Ascending aorta (tissue), 2 donors: ENCODE measurements at regions of chr1 and their contacts with region 1.

Region 1: GRCh38 chr1:192559115-192560006 is 16.2 kb upstream of the RGS1 start:
- DNase-seq: no peak
- H3K4me3 ChIP-seq: no peak overlapping the region
- H3K27ac ChIP-seq: peak overlapping the region; percentile 73 to 77
- H3K4me1 ChIP-seq: peaks cover 0 to 7% of the 10 kb centered on the region in 2 donors
- H3K27me3 ChIP-seq: no peaks in the 10 kb centered on the region
- CTCF ChIP-seq: no peak

Region 2: DNA sequence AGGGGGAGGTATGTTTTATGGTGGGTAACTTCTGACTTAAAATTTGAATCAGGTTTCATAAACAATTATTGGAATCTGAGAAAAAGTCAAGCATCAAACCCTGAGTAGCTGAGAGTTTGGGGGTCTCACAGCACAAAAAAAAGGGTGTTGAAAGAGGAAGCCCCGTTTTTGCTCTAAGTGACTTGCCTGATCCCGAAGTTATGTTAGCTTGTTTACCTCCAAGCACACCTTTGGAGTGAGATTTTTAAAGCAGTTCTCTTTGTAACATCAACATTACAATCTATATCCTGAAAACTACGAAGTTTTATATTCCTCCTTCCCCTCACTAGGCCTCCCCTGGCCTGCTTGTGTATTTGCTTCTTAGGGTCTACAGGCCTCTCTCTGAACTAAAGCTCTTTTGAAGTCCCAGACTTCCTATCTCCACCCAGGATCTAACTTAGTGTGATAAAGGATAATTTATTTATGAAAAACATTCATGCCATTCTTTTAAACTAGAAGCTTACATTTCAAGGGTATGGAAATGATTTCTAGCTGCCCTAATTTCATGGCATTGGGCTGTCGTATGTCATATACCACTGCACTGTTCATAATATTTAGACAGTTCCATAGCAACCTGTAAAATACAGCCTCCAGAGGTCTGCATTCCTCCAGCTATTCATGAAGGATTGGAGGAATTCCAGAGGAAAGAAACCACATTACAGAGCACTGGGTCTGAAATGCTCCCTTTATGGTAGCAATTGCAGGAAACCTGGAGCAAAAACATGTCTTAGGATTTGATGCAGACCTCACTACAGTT is 19.9 kb before region 1 on chr1:
- intact Hi-C with region 1: loop called (anchors 2 kb)
- DNase-seq: no peak
- H3K4me3 ChIP-seq: no peak overlapping the region
- H3K27ac ChIP-seq: peak overlapping the region; percentile 81 to 90
- H3K4me1 ChIP-seq: peaks cover 12 to 21% of the 10 kb centered on the region in 2 donors
- H3K27me3 ChIP-seq: no peaks in the 10 kb centered on the region
- CTCF ChIP-seq: no peak

Region 3: GRCh38 chr1:192766009-192766625 is 206.8 kb after region 1 on chr1:
- intact Hi-C with region 1: no loop called
- DNase-seq: no peak
- H3K4me3 ChIP-seq: no peak overlapping the region
- H3K27ac ChIP-seq: no peak overlapping the region
- H3K4me1 ChIP-seq: no peaks in the 10 kb centered on the region
- H3K27me3 ChIP-seq: no peaks in the 10 kb centered on the region
- CTCF ChIP-seq: no peak